Activated CD4-positive, alpha-beta memory T cell treated with anti-CD3 and anti-CD28 coated beads for 36 hours (primary cell): ENCODE measurements at regions of chr1 and their contacts with region 1.

Region 1: DNA sequence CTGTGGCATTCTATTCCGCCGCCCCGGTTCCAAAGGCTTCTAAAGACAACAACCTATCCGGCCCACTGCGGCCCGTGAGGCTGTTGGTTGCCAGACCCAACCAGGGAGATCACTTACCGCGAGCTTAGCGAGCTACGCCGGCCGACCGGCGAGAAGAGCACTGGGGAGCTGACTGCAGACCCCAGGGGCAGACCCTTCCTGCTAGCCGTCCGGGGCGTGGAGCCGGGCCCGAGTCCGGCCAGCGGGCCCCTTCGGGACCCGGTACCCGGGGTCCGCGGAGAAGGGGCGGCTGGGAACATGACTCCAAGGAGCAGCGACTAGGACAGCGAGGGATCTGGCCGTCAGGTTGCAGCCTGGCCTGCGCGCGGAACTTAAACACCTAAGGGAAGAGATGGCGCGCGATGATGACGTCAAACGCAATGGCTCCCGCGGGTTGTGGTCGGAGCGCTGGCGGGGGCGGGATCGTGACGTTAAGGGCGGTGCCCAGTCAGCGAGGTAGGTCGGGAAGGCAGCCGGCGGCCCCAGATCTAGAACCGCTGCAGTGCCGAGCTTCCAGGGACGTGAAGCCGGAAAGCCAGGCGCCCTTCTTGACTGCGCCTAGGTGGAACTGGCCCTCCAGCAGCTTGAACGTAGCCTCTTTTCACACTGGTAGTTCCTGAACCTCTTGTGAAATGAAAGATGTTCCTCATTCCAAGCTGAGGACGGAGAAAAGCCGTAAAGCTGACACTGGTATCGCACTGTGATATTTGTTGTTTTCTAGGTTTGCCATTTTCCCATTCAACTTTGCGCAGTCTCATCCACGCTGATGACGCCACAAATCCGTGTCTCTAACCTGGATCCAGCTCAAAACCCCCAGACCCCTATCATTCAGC is at the start of gene NUP133:
- DNase-seq: peak; percentile 99
- H3K4me3 Mint-ChIP-seq: peak within 1 kb of the TSS; percentile 93
- H3K27ac Mint-ChIP-seq: peak within 1 kb of the TSS; percentile 83
- H3K4me1 Mint-ChIP-seq: peaks cover 26% of the 10 kb centered on the region
- H3K27me3 Mint-ChIP-seq: peaks cover 2% of the 10 kb centered on the region
- total RNA-seq, gene NUP133: 54.1 to 57.0 TPM

Region 2: DNA sequence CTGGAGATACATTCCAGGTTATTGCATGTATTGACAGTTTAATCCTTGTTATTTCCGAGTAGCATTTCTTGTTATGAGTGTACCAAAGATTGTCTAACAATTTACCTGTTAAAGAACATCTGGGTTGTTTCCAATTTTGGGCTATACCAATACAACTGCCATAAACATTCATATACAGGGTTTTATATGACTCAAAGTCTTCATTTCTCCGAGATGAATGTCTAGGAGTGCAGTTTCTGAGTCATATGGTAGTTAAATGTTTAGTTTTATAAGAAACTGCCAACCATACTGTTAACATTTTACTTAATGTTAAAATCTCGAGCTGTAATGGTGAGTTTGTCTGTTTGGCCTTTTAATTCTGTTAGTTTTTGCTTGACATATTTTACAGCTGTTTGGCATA is 227.3 kb before region 1 on chr1:
- CTCF ChIA-PET with region 1: no interaction called
- POLR2A ChIA-PET with region 1: no interaction called
- intact Hi-C with region 1: loop called (anchors 5 kb)
- DNase-seq: no peak
- H3K4me3 Mint-ChIP-seq: no peak overlapping the region
- H3K27ac Mint-ChIP-seq: peak overlapping the region; percentile 7
- H3K4me1 Mint-ChIP-seq: peaks cover 37% of the 10 kb centered on the region
- H3K27me3 Mint-ChIP-seq: no peaks in the 10 kb centered on the region

Region 3: DNA sequence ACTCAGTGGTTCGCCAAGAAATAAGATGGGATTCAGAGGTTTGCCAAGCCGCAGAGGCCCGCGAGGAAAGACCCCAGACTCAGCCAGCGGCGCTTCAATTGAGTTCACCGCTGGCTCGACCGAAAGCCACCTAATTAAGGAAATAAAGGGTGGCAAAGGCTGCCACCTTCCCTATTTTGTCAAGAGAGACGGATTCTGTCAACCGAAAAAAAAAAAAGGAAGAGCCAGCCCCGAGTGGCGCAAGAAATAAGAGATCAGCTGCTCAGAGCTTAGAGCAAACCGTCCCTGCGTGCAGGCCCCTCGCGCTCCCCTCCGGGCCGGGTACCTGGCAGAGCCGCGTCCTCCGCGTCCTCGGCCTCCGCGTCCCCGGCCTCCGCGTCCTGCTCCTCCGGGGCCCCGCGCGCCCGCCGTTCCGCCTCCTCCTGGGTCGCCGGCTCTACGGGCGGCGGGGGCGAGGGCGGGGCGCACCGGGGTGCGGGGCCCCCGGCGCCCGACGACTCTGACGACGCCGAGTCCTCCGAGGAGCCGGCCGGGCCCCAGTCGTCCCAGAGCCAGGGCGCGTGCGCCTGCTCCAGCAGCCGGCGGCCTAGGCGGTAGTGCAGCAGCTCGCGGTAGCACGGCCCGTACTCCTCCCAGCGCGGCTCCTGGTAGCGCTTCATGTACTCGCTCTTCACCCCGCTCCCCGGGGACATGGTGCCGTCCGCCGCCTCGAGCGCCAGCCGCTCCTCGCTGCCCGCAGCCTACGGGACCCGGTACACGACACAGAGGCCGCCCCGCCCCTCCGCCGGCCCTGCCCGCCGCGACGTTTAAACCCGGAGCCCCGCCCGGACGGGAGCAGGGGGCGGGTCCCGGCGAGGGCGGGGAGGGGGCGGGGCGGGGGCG is 166.2 kb before region 1 on chr1:
- CTCF ChIA-PET with region 1: no interaction called
- POLR2A ChIA-PET with region 1: no interaction called
- intact Hi-C with region 1: loop called (anchors 2 kb)
- DNase-seq: peak; percentile 83
- H3K4me3 Mint-ChIP-seq: peak overlapping the region; percentile 81
- H3K27ac Mint-ChIP-seq: peak overlapping the region; percentile 70
- H3K4me1 Mint-ChIP-seq: peaks cover 54% of the 10 kb centered on the region
- H3K27me3 Mint-ChIP-seq: peaks cover 7% of the 10 kb centered on the region

Region 4: GRCh38 chr1:229440851-229441537 is 67.2 kb before region 1 on chr1:
- CTCF ChIA-PET with region 1: no interaction called
- POLR2A ChIA-PET with region 1: interaction called, 4 read pairs
- intact Hi-C with region 1: loop called (anchors 2 kb)
- DNase-seq: no peak
- H3K4me3 Mint-ChIP-seq: no peak overlapping the region
- H3K27ac Mint-ChIP-seq: peak overlapping the region; percentile 56
- H3K4me1 Mint-ChIP-seq: peaks cover 22% of the 10 kb centered on the region
- H3K27me3 Mint-ChIP-seq: peaks cover 17% of the 10 kb centered on the region

Region 5: DNA sequence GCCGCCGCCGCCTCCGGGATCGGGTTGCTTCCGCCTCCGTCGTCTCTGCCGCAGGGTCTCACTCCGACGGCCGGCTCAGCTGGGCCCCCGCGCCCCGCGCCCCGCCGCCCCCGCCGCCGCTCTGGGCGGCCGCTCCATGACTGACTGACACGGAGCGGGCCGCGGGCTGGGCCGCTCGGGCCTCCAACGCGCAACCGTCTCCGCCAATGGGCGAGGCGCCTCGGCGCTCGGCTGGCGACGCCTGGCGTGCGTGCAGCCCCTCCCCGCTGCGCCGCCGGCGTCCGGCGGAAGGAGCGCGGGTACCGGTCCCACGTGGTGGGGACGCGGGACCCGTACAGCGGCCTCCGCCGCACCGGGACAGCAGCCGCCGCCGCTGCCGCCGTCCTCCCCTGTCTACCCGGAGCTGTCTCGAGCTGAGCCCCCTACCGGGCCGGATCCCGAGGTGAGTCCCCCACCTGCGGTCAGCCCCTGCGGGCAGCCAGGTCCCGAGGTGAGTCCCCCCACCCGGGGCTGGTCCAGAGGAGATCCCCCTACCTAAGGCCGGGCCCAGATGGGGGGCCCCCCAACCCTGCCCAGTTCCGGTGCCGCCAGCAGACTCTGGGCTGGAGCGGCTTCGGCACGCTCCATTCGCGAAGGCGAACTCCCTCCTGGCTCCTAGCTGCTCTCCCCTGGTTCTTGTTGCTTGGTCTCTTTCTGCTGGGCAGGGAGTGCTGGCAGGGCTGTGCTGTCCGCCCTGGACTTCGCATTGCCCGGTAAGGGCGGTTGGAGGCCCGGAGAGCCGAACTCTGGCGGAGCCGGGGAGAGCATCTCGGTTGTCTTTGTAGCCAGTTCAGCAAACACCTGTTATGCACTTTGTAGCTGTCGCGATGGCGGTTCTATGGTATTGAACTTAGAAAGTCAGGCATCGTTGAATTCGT is 118.0 kb after region 1 on chr1 and contains the starts of genes TAF5L and URB2:
- CTCF ChIA-PET with region 1: no interaction called
- POLR2A ChIA-PET with region 1: interaction called, 5 read pairs
- intact Hi-C with region 1: loop called (anchors 2 kb)
- DNase-seq: peak; percentile 91
- H3K4me3 Mint-ChIP-seq: peak within 1 kb of the TSS; percentile 99
- H3K27ac Mint-ChIP-seq: peak within 1 kb of the TSS; percentile 89
- H3K4me1 Mint-ChIP-seq: peaks cover 65% of the 10 kb centered on the region
- H3K27me3 Mint-ChIP-seq: no peaks in the 10 kb centered on the region
- total RNA-seq, gene TAF5L: 14.1 to 17.8 TPM
- total RNA-seq, gene URB2: 13.8 to 14.6 TPM